Transverse colon (tissue), 4 donors: ENCODE measurements at regions of chr2 and their contacts with region 1.

Region 1: DNA sequence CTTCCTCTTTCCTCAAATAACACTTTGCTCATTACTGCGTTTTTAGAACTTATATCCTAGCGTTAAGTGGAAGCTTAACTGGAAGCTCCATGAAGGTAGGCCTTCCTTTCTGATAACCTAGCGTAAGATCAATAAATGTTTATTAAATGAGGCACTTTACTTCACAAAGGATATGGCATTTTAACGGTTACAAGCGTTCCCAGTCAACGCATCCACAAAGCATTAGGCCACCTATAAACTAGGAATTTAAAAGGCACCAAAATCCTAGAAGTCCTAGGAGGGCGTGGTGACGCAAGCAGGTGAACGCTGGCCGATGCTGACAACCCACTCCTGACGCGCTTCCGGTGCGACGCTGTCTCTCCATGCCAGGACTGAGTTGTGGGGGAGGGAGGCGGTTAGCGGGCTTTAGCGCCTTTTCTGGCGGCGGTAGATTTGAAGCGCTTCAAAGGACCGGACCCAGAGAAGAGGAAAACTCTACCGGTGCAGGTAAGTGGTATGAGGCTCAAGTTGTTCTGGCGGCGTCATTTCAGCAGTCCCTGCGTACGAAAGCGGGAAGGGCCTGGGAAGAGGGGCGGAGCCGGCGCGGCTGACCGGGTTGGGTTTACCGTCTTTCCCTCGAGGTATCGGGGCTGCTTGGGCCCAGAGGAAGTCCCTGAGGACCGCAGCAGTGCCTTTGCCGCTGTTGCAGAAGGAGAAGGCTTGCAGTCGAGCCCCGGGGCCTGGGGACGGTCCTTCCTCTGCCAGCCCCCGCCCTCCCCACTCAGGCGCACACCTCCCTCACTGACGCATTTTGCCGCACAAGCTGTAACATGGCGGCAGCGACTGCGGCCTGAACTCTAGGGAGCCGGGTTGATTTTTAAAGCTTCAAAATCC is at the start of gene PPIG:
- DNase-seq: peak; percentile 93
- H3K4me3 ChIP-seq: peak within 1 kb of the TSS; percentile 85 to 90 (median 86)
- H3K27ac ChIP-seq: peak within 1 kb of the TSS; percentile 93 to 98 (median 97)
- H3K4me1 ChIP-seq: peaks cover 13 to 22% (median 21%) of the 10 kb centered on the region in 4 donors
- H3K27me3 ChIP-seq: no peaks in the 10 kb centered on the region
- CTCF ChIP-seq: no peak
- EP300 ChIP-seq: peak; percentile 14
- POLR2A ChIP-seq: peak; percentile 70
- total RNA-seq, gene PPIG: 25.9 to 55.7 (median 44.4) TPM

Region 2: DNA sequence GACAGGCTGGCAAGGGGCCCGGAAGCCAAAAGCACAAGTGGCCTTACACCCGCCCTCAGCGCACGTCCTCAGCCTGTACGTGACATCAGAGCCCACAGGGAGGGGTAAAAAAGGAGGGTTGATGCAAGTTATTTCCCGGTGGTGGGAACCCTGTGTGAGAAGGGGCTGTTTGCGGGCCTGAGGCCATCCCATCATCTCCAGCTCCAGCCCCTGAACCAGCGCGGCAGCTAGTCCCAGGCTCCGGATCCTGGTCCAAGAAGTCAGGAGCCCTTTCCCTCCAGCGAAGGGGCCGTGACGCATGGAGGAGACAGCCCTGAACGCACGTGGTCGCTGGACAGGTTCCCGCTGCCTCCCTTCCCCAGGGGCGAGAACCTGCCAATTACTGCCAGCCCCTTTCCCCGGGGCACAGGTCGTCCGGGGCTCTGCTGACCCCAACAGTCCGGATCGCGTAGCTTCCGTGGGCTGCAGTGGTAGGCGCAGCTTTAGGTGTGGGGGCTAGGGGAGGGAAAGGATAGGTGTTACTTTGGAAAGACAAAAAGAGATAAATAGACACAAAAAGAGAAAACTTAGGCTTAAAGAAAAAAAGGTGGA is 220.6 kb before region 1 on chr2:
- in situ Hi-C with region 1: no loop called
- intact Hi-C with region 1: no loop called
- DNase-seq: peak; percentile 12
- H3K4me3 ChIP-seq: peak overlapping the region in 3 of 4 donors; percentile 33 to 59 (median 41)
- H3K27ac ChIP-seq: no peak overlapping the region
- H3K4me1 ChIP-seq: peaks cover 24 to 43% (median 39%) of the 10 kb centered on the region in 4 donors
- H3K27me3 ChIP-seq: peaks cover 53% of the 10 kb centered on the region
- CTCF ChIP-seq: no peak
- EP300 ChIP-seq: no peak
- POLR2A ChIP-seq: no peak

Region 3: DNA sequence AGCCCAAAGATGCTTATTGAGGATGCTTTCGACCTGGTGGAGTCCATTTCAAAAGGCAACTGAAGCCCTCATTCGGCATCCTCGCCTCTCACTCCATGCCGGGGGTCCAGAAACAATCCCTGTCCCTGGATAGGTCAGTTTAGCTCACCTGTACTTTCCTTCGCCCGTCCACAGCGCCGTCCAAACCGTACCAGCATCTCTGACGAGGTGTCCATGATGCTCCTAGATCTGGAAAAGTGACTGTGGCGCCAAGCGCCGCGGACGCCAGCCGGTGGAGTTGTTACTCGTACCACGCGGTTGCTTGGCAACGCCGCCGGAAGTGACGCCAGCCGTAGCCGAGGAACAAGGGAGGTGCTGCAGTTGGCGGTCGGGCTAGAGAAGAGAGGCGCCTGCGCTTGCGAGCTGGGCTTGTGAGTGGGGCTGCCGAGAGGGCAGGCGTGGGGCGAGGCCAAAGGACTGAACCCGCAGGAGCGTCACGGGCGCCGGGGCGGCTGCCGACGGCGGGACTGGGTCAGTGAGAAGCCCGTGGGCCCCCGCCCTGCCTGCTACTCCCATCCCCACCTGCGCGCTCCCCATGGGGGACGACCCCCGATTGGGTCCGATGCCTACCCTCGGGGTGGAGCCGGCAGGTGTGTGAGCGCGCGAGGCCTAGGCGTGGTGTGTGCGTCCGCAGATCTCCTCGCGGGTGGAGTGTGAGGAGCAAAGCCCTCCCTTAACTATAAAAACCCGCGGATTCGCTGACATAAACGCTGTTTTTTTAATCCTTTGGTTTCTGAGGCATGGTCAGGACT is 110.1 kb after region 1 on chr2 and contains the starts of genes CFAP210 and PHOSPHO2:
- in situ Hi-C with region 1: loop called in 1 of 4 experiments (anchors 10 kb)
- intact Hi-C with region 1: no loop called
- DNase-seq: peak; percentile 100
- H3K4me3 ChIP-seq: peak within 1 kb of the TSS; percentile 66 to 88 (median 82)
- H3K27ac ChIP-seq: peak within 1 kb of the TSS; percentile 88 to 96 (median 92)
- H3K4me1 ChIP-seq: peaks cover 5 to 15% (median 8%) of the 10 kb centered on the region in 4 donors
- H3K27me3 ChIP-seq: no peaks in the 10 kb centered on the region
- CTCF ChIP-seq: no peak
- EP300 ChIP-seq: no peak
- POLR2A ChIP-seq: peak; percentile 93
- total RNA-seq, gene CFAP210: not detected
- total RNA-seq, gene PHOSPHO2: 2.6 to 16.5 (median 7.7) TPM